Heart right ventricle (tissue), 16 donors: ENCODE measurements at regions of chr1 and their contacts with region 1.

Region 1: GRCh38 chr1:36369061-36369861 is 16.5 kb downstream of the STK40 start:
- DNase-seq: peak; percentile 66 to 79
- ATAC-seq: peak in 3 of 8 donors; percentile 21 to 41 (median 26)
- H3K4me3 ChIP-seq: no peak overlapping the region
- H3K27ac ChIP-seq: peak overlapping the region in 5 of 10 donors; percentile 1 to 46 (median 13)
- H3K4me1 ChIP-seq: peaks cover 40 to 89% (median 66%) of the 10 kb centered on the region in 9 donors
- H3K27me3 ChIP-seq: no peaks in the 10 kb centered on the region
- CTCF ChIP-seq: peak; percentile 91 to 97 (median 94)

Region 2: DNA sequence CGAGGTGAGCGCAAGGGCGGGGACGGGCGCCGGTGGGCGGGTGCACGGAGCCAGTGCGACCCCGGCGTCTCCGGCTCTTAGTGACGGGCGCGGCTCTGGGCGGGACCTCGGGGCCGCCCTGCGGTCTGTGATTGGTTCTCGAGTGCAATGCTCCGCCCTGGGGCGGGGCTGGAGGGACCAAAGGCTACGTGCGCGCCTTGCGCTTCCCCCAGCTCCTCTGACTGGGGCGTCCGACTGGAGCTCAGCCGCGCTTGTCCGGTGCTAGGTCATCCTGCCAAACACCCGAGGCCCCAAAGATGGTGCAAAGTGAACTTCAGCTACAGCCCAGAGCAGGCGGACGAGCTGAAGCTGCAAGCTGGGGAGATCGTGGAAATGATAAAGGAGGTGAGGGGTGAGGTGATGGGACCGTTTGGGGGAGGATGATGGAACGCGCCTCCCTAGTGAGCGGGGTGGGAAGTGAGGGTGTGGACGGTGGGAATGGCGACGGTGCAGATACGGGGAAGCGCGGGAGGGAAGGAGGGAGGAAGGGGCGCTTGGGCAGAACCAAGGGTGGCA is 62.3 kb before region 1 on chr1:
- intact Hi-C with region 1: loop called in 3 of 10 experiments (anchors 5 to 10 kb)
- DNase-seq: peak; percentile 91 to 93
- ATAC-seq: peak; percentile 97 to 99 (median 98)
- H3K4me3 ChIP-seq: peak overlapping the region; percentile 65 to 98 (median 84)
- H3K27ac ChIP-seq: peak overlapping the region; percentile 48 to 91 (median 80)
- H3K4me1 ChIP-seq: peaks cover 4 to 33% (median 18%) of the 10 kb centered on the region in 9 donors
- H3K27me3 ChIP-seq: no peaks in the 10 kb centered on the region
- CTCF ChIP-seq: no peak

Region 3: GRCh38 chr1:36323597-36324352 is 45.5 kb before region 1 on chr1 and contains the start of gene EVA1B:
- intact Hi-C with region 1: loop called in 4 of 10 experiments (anchors 5 kb)
- DNase-seq: peak; percentile 88 to 89
- ATAC-seq: peak; percentile 49 to 84 (median 76)
- H3K4me3 ChIP-seq: peak within 1 kb of the TSS; percentile 26 to 99 (median 87)
- H3K27ac ChIP-seq: peak within 1 kb of the TSS; percentile 81 to 97 (median 94)
- H3K4me1 ChIP-seq: peaks cover 12 to 53% (median 35%) of the 10 kb centered on the region in 9 donors
- H3K27me3 ChIP-seq: no peaks in the 10 kb centered on the region
- CTCF ChIP-seq: no peak
- total RNA-seq, gene EVA1B: 4.6 to 16.0 (median 6.8) TPM

Region 4: GRCh38 chr1:36924282-36924811 is 555.1 kb after region 1 on chr1:
- intact Hi-C with region 1: no loop called
- DNase-seq: peak; percentile 30 to 54
- ATAC-seq: peak in 6 of 8 donors; percentile 34 to 67 (median 56)
- H3K4me3 ChIP-seq: no peak overlapping the region
- H3K27ac ChIP-seq: no peak overlapping the region
- H3K4me1 ChIP-seq: no peaks in the 10 kb centered on the region
- H3K27me3 ChIP-seq: peaks cover 0 to 49% (median 27%) of the 10 kb centered on the region in 7 donors
- CTCF ChIP-seq: no peak